PC-9 (cell line): ENCODE measurements at regions of chr13 and their contacts with region 1.

Region 1: DNA sequence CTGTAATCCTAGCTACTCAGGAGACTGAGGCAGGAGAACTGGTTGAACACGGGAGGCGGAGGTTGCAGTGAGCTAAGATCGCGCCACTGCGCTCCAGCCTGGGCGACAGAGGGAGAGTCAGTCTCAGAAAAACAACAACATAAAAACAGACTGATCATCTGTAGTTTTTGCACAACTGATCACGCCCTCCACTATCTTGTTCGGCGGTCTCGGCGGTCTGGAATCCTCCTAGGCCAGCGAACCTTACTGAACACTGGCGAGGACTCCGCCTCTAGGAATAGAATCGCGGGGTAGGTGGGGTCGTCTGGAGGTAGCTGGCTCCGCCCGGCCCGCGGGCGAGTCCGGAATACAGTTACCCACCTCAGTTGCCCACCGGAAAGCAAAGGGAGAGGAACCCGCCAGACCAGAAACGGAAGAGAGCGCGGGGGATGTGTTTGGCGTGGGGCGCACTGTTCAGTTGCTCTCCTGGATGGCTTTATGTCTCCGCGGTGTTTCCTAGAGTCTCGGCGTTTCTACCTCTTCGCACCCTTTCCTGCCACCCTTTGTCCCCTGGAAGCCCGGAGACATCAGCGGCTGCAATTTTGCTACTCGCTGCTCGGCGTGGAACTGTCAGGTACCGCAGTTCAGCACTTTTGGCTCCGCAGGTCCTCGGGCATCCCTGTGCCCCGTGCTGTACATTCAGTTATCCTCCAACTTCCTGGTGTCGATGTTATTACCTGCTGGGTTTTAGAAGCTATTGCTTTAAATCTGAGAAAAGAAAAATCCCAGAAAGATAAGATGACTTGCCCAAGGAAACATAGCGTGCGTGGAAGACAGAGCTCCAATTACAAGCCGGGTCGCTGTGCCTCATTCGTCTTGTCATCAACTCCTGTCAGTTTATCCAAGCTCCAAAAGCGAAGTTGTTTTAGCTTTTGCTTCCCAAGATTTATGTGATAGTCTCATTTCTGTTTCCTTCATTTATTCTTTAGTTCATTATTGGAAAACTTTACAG is 24.9 kb upstream of the HNRNPA1L2 start:
- DNase-seq: peak; percentile 77 to 88
- H3K4me3 ChIP-seq: peak overlapping the region; percentile 95
- H3K27ac ChIP-seq: peak overlapping the region; percentile 51
- H3K4me1 ChIP-seq: peaks cover 8% of the 10 kb centered on the region
- H3K27me3 ChIP-seq: no peaks in the 10 kb centered on the region
- CTCF ChIP-seq: no peak

Region 2: GRCh38 chr13:52127378-52127777 is 490.0 kb before region 1 on chr13:
- CTCF ChIA-PET with region 1: no interaction called
- POLR2A ChIA-PET with region 1: no interaction called
- intact Hi-C with region 1: no loop called
- DNase-seq: no peak
- H3K4me3 ChIP-seq: no peak overlapping the region
- H3K27ac ChIP-seq: no peak overlapping the region
- H3K4me1 ChIP-seq: peaks cover 11% of the 10 kb centered on the region
- H3K27me3 ChIP-seq: no peaks in the 10 kb centered on the region; the same call in 1 of the 2 replicates
- CTCF ChIP-seq: no peak

Region 3: DNA sequence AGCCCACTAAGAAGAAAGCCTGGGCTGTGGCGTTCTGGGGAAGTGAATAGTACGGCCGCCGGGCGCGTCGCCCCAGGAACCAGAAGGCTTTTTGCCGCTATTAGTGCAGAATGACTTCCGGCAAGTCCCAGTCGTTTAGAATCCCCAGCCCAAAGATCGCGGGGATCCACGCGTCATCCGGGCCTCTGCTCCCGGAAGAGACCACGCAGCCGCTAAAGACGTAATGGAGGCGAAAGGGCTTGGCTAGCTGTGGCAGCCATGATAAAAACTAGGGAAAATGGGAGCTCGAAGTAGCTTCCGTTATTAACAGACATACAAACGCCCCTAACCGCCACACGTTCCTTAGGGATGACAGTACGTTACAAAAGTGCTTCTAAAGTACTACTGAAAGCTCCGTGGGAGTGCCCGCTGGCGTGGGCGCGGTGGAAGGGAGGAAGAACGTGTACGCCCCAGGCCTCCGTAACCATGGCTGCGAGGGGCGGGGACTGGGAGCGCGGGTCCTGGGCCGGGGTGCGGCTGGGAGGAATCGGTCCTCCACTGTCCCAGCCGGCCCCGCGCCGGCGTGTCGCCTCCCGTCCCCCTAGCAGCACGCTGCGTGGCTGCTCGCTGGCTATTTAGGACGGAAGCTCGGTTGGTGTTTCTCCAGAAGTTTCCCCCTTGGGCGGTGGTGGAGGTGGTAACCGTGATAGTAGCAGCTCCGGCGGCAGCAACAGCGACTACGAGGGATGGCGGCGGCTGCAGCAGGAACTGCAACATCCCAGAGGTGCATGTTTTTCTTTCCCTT is 35.0 kb after region 1 on chr13 and contains the start of gene SUGT1:
- CTCF ChIA-PET with region 1: interaction called, 4 read pairs
- POLR2A ChIA-PET with region 1: interaction called, 5 read pairs
- intact Hi-C with region 1: loop called (anchors 1 kb)
- DNase-seq: peak; percentile 94 to 97
- H3K4me3 ChIP-seq: peak within 1 kb of the TSS; percentile 86
- H3K27ac ChIP-seq: peak within 1 kb of the TSS; percentile 93
- H3K4me1 ChIP-seq: peaks cover 23% of the 10 kb centered on the region
- H3K27me3 ChIP-seq: no peaks in the 10 kb centered on the region
- CTCF ChIP-seq: no peak; the same call in 1 of the 2 replicates
- total RNA-seq, gene SUGT1: 48.8 and 57.2 TPM in 2 replicates